ENCODE measurements at regions of chr7 and their contacts with region 1.

Region 1: DNA sequence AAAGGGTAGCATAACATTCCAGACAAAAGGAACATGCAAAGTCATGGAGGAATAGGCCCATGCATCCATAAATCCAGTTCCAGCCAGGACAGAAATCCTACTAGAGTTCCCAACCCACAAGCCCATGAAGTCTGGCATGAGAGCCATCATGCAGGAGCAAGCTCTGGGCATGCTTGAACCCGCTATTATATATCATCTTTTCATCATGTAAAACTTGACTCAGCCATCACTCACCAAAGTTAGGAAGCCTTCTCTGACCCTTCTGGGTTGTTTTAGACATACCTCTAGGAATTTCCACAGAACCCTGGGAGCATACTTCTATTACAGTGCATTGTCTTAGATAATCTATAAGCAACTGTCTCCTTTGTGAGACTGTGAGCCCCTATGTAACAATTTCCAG is 293.0 kb upstream of the NPSR1 start:
- DNase-seq: no peak

Region 2: GRCh38 chr7:34406848-34407530 is 42.0 kb after region 1 on chr7:
- intact Hi-C with region 1: no loop called
- DNase-seq: no peak

Region 3: GRCh38 chr7:34966504-34967174 is 601.6 kb after region 1 on chr7:
- intact Hi-C with region 1: loop called in 1 of 2 experiments (anchors 5 kb)
- DNase-seq: no peak

Region 4: GRCh38 chr7:35849158-35849831 is 1484.3 kb after region 1 on chr7:
- intact Hi-C with region 1: no loop called
- DNase-seq: no peak

Measured in posterior vena cava (tissue), 2 donors.